Activated T-helper 1 cell treated with anti-CD3 and anti-CD28 coated beads, Interleukin-12 subunit alpha, Interleukin-12 subunit beta, Interleukin-2, Interleukin-4 antibody, amounts not matched to agents 30 ng/mL and 10 ng/mL and 1 ng/mL, durations not matched to agents 14 hours and 24 hours and 36 hours (primary cell): ENCODE measurements at regions of chr1 and their contacts with region 1.

Region 1: GRCh38 chr1:201114236-201115131 is 2.3 kb upstream of the CACNA1S start:
- DNase-seq: peak; percentile 57
- H3K4me3 Mint-ChIP-seq: peak overlapping the region; percentile 85
- H3K27ac Mint-ChIP-seq: peak overlapping the region; percentile 48
- H3K4me1 Mint-ChIP-seq: no peaks in the 10 kb centered on the region
- H3K27me3 Mint-ChIP-seq: peaks cover 35% of the 10 kb centered on the region

Region 2: DNA sequence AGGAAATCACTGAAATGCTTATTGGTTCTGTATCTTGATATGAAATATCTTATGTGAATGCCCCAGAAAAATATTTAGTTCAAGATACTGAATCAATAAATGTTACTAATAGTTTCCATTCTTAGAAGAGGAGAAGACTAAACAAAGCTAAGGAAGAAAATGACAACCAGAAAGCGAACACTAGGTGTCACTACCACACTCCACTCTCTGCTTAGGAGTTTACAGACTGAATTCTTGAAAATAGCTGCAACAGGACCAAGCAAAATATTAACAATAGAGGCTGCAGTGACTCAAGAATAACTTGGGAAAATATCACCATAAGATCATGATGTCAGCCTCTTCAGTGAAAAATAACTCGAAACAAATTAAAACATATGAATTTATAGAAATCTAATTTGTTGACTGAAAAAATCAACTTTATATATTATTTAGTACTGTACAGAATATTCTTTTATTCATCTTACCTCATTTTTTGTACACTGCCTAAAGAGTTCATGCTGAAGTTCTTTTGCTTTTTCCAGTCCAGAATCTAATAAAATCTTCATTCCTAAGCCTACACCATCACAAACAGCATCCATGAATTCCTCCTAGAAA is 555.5 kb before region 1 on chr1:
- intact Hi-C with region 1: loop called (anchors 10 kb)
- DNase-seq: no peak
- H3K4me3 Mint-ChIP-seq: no peak overlapping the region
- H3K27ac Mint-ChIP-seq: no peak overlapping the region
- H3K4me1 Mint-ChIP-seq: peaks cover 16% of the 10 kb centered on the region
- H3K27me3 Mint-ChIP-seq: no peaks in the 10 kb centered on the region

Region 3: DNA sequence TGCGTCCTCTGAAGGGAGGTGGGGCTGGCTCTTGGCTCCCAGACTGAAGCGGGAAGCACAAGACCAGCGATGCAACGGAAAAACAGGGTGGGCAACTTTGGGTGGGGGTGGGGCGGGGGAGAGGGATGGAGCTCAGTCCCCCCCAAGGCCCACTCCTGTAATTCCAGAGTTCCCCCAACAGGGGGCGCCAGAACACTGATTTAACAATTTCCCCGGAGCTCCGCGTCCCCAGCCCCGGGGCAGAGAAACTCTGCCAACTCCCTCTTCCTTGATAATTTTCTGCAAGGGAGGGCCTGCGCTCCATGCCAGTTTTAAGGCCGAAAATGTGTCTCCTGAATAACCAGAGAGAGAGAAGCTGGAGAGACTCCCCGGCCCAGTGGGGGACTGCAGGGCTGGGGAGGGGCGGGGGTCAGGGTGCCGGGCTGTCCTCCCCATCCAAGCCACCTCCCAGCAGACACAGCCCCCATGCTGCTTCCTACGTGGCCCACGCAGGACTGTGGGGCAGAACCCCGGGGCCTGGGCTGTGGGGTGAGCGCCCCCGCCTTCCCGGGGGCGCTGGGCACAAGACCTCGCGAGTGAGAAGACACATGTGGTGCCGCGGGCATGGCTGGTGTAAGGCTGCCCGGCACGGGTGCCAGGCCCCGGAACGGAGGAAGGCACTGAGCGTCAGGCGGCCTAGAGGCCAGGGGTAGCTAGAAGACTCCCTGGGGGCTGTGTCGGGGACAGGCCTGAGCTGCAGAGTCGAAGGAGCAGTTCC is 142.4 kb before region 1 on chr1:
- intact Hi-C with region 1: loop called (anchors 1 kb)
- DNase-seq: peak; percentile 26
- H3K4me3 Mint-ChIP-seq: no peak overlapping the region
- H3K27ac Mint-ChIP-seq: no peak overlapping the region
- H3K4me1 Mint-ChIP-seq: peaks cover 4% of the 10 kb centered on the region
- H3K27me3 Mint-ChIP-seq: no peaks in the 10 kb centered on the region

Region 4: DNA sequence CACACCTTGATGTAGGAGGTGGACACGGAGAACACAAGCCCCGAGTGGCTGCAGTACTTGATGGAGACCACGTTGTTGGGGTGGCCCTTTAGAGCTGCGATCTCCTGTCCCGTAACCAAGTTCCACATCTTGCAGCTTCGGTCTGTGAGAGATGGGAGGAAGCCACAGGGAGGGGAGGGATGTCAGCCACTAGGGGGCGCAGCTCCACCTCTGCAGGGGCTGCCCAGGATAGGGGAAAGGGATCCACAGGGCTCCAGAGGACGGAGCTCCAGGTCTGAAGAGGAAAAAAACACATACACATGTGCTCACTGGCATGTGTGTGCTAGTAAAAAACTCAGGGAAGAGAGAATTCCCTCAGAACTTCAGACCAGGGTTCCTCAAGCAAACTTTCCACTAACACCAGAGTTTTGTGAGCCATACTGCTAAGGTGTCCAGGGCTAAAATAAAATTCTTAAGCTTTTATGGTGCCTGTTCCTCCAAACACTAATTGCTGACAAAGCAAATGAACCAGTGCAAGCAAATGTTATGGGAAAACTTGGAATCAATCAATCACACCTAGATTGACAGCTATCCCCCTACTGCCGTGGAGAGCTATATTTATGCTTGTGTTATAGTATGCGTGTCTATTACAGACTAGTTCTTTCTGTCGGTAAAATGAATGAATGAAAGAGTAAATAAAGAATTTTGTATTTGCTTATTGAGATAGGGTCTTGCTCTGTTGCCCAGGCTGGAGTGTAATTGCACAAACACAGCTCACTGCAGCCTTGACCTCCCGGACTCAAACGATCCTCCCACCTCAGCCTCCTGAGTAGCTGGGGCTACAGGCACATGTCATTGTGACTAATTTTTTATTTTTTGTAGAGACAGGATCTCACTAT is 134.7 kb before region 1 on chr1:
- intact Hi-C with region 1: loop called (anchors 1 kb)
- DNase-seq: peak; percentile 26
- H3K4me3 Mint-ChIP-seq: no peak overlapping the region
- H3K27ac Mint-ChIP-seq: no peak overlapping the region
- H3K4me1 Mint-ChIP-seq: no peaks in the 10 kb centered on the region
- H3K27me3 Mint-ChIP-seq: no peaks in the 10 kb centered on the region

Region 5: DNA sequence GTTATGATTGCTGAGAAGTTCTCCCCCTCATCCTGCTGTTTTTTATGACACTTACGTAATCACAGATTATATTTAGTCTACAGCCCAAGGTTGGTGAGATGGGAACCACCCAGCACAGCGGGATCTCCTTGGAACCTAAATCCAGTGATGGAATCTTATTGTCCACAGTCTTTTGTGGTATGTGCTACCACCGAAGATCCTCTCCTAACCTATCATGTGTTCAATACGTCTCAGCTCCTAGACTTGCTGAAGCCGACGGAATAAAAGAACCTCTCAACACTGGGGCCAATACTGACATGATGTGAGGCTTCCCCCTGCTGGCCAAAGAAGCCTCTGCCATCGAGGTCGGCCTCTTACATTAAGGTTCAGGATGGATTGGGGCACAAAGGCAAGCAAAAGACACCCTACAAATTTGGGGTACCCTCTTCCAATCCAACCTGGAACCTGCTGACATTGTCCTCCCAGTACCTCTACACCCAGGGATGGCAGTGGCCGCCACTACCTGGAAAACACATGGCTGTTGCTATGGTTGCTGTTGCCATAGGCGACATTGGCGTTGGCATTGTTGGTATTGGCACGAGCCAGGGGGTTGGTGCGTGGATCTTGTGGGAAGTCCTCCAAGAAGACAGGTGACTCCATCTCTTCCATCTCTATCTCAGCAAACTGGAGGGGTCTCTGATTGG is 71.6 kb before region 1 on chr1:
- intact Hi-C with region 1: loop called (anchors 1 kb)
- DNase-seq: peak; percentile 53
- H3K4me3 Mint-ChIP-seq: no peak overlapping the region
- H3K27ac Mint-ChIP-seq: no peak overlapping the region
- H3K4me1 Mint-ChIP-seq: peaks cover 5% of the 10 kb centered on the region
- H3K27me3 Mint-ChIP-seq: peaks cover 14% of the 10 kb centered on the region

Region 6: DNA sequence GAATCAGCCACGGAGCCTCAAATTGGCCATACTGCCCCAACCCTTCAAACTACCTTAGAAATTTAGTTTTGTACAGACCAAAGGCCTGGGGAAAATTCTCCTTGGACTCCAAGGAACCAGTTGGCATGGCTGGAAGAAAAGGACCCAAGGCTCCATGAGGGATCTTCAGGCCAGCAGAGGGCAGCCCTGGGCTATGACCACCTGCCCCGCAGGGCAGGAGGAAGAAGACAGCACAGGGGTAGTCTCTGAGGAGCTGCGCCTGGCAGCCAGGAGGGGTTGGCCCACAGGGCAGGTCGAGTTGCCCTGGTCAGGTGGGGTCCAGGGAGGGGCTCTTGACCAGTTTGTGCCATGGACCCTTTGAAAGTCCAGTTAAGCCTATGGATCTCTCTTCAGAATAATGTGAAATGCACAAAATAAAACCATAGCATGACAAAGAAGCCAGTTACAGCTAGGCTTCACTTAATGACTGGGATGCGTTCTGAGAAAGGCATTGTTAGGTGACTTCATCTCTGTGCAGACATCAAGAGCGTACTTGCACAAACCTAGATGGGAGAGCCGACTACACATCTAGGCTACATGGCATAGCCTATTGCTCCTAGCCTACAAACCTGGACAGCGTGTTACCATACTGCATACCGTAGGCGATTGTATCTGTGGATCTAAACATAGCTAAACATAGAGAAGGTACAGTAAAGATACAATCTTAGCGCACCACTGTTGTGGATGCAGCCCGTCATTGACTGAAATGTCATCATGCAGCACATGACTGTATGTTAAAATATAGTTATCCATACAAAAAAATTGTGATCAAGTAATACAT is 28.4 kb before region 1 on chr1:
- intact Hi-C with region 1: loop called (anchors 1 kb)
- DNase-seq: no peak
- H3K4me3 Mint-ChIP-seq: no peak overlapping the region
- H3K27ac Mint-ChIP-seq: no peak overlapping the region
- H3K4me1 Mint-ChIP-seq: no peaks in the 10 kb centered on the region
- H3K27me3 Mint-ChIP-seq: peaks cover 12% of the 10 kb centered on the region

Region 7: DNA sequence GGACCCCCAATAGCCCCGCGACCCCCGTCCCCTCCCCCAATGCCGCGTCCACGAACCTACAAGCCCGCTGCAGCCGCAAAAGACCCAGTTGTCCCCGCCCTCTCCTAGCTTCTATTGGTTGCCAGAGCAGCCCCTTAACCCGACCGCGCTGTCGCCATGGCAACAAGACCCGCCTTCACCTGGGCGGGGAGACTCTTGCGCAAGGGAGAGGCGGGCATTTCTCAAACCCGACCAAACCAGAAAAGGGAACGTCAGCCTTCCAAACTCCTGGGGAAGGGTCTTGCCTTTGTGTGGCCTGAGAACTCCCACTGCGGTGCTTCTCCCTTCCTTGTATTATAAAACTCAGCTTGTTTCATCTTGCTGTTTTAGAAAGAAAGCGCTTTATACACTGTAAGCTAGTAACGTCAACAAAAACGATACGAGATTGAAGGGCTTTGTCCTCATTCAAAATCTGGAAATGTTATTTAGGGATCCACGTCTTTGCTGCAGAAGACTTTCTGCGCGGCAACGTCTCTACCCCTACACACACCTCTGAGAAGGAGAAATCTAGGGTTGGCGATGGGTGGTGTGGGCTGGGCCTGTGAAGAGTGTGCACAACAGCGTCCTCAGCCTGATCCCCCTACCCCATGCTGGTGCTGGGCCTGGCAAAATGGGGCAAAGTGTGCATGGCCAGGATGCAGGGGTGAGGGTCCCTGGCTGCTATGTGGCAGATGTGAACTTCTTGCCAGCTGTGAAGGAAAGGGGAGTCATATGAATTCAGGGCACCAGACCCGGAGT is 40.1 kb after region 1 on chr1 and contains the start of gene TMEM9:
- intact Hi-C with region 1: loop called (anchors 1 kb)
- DNase-seq: peak; percentile 95
- H3K4me3 Mint-ChIP-seq: peak within 1 kb of the TSS; percentile 85
- H3K27ac Mint-ChIP-seq: peak within 1 kb of the TSS; percentile 88
- H3K4me1 Mint-ChIP-seq: peaks cover 23% of the 10 kb centered on the region
- H3K27me3 Mint-ChIP-seq: peaks cover 18% of the 10 kb centered on the region
- total RNA-seq, gene TMEM9: 13.2 and 13.9 TPM in 2 replicates